Right lobe of liver (tissue), 6 donors: ENCODE measurements at regions of chr12 and their contacts with region 1.

Region 1: GRCh38 chr12:117236456-117237001 is 46.3 kb upstream of the FBXO21 start:
- DNase-seq: peak; percentile 82 to 84 (median 83)
- ATAC-seq: peak; percentile 66 to 80 (median 70)
- H3K4me3 ChIP-seq: no peak overlapping the region
- H3K27ac ChIP-seq: no peak overlapping the region
- H3K4me1 ChIP-seq: no peaks in the 10 kb centered on the region
- H3K27me3 ChIP-seq: no peaks in the 10 kb centered on the region
- CTCF ChIP-seq: peak; percentile 56 to 85 (median 81)
- POLR2A ChIP-seq: no peak

Region 2: DNA sequence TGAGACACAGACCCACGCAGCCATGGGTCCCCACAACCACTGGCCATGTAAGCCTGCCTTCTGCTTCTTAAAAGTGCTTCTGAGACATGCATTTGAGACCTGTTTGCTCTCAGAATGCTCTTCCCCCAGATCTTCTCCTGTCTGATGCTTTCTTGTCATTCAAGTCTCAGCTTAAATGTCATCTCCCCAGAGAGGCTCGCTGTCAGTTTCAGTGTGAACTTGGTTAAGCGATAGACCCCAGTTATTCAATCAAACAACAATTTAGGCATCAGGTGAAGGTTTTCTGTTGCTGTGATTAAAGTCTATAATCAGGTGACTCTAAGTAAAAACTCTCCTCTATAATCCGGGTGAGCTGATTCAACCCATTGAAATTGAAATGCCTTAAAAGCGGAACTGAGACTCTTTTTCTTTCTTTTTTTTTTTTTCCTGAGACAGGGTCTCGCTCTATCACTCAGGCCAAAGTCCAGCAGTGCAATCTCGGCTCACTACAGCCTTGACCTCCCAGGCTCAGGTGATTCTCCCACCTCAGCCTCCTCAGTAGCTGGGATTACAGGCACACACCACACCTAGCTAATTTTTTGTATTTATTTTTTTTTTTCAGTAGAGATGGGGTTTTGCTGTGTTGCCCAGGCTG is 608.9 kb after region 1 on chr12:
- intact Hi-C with region 1: loop called (anchors 5 to 10 kb)
- DNase-seq: no peak
- ATAC-seq: no peak
- H3K4me3 ChIP-seq: no peak overlapping the region
- H3K27ac ChIP-seq: no peak overlapping the region
- H3K4me1 ChIP-seq: no peaks in the 10 kb centered on the region
- H3K27me3 ChIP-seq: no peaks in the 10 kb centered on the region
- CTCF ChIP-seq: no peak
- POLR2A ChIP-seq: no peak